H1 (cell line): ENCODE measurements at regions of chr19 and their contacts with region 1.

Region 1: GRCh38 chr19:14136509-14137281 is at the start of gene ASF1B:
- DNase-seq: peak; percentile 96 to 97
- H3K4me3 ChIP-seq: peak within 1 kb of the TSS; percentile 75 to 86 (median 80)
- H3K27ac ChIP-seq: peak within 1 kb of the TSS; percentile 78
- H3K4me1 ChIP-seq: peaks cover 2 to 11% (median 5%) of the 10 kb centered on the region in 4 experiments
- H3K27me3 ChIP-seq: no peaks in the 10 kb centered on the region
- CTCF ChIP-seq: peak; percentile 37 to 63 (median 55)
- EP300 ChIP-seq: no peak
- POLR2A ChIP-seq: peak; percentile 71 to 93
- RAD21 ChIP-seq: peak; percentile 70 to 75
- total RNA-seq, gene ASF1B: 32.1 and 32.6 TPM in 2 replicates

Region 2: GRCh38 chr19:14147797-14148605 is 11.3 kb after region 1 on chr19:
- CTCF ChIA-PET with region 1: interaction called, 24 read pairs
- POLR2A ChIA-PET with region 1: interaction called, 25 read pairs
- DNase-seq: peak in 1 of 2 experiments; percentile 73
- H3K4me3 ChIP-seq: no peak overlapping the region
- H3K27ac ChIP-seq: 0 out of 2 replicates have a peak overlapping the region, but pooled peaks have one; percentile 1
- H3K4me1 ChIP-seq: peaks cover 0 to 21% (median 15%) of the 10 kb centered on the region in 4 experiments; a peak in 6 of 7 replicates
- H3K27me3 ChIP-seq: no peaks in the 10 kb centered on the region; a peak in 1 of 7 replicates
- CTCF ChIP-seq: peak; percentile 43 to 52 (median 47); a peak in 3 of 4 replicates
- EP300 ChIP-seq: no peak
- POLR2A ChIP-seq: peak in 1 of 2 experiments; percentile 68; a peak in 1 of 3 replicates
- RAD21 ChIP-seq: peak; percentile 44 to 56

Region 3: DNA sequence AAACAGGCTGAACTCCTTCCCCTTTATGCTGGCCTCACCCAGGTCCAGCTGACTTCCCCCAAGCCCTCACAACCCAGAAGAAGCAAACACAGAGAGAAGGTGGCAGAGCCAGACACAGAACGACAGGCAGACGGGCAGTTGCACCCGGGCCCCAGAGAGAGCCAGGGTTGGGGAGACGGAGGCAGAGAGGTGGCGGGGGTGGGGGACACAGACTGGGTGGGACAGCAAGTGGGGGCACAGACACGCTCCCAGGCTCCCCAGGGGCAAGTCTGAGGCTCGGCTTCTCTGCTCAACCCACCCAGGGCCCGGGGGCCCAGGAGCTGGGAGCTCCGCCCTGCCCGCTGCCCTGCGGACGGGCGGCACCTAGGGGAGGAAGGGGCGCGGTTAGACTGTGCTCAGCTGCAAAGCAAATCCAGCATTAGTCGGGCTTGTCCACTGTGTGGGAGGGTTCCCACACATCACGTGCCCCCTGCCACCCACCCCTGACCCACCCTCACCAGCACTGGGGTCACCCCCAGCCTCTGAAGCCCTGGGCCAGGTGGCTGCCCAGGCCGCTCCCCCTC is 31.0 kb after region 1 on chr19:
- CTCF ChIA-PET with region 1: interaction called, 4 read pairs
- POLR2A ChIA-PET with region 1: interaction called, 10 read pairs
- DNase-seq: no peak
- H3K4me3 ChIP-seq: no peak overlapping the region
- H3K27ac ChIP-seq: no peak overlapping the region
- H3K4me1 ChIP-seq: peaks cover 0 to 7% (median 4%) of the 10 kb centered on the region in 4 experiments; a peak in 3 of 7 replicates
- H3K27me3 ChIP-seq: no peaks in the 10 kb centered on the region
- CTCF ChIP-seq: no peak
- EP300 ChIP-seq: no peak
- POLR2A ChIP-seq: no peak; a peak in 1 of 3 replicates
- RAD21 ChIP-seq: no peak